SK-N-SH (cell line): ENCODE measurements at regions of chr15 and their contacts with region 1.

Region 1: GRCh38 chr15:74995241-74995778 is at the start of gene SCAMP5:
- DNase-seq: peak; percentile 97
- H3K4me3 ChIP-seq: peak within 1 kb of the TSS; percentile 67 to 84
- H3K27ac ChIP-seq: peak within 1 kb of the TSS in 1 of 2 experiments; percentile 90; a peak in 2 of 4 replicates
- H3K4me1 ChIP-seq: peaks cover 0 to 17% of the 10 kb centered on the region in 2 experiments; a peak in 1 of 4 replicates
- H3K27me3 ChIP-seq: no peaks in the 10 kb centered on the region
- CTCF ChIP-seq: no peak
- EP300 ChIP-seq: 0 out of 4 replicates have a peak, but pooled peaks of 1 of the 2 experiments have one; percentile 2
- RAD21 ChIP-seq: no peak
- polyA plus RNA-seq, gene SCAMP5: 27.9 and 32.7 TPM in 2 replicates

Region 2: DNA sequence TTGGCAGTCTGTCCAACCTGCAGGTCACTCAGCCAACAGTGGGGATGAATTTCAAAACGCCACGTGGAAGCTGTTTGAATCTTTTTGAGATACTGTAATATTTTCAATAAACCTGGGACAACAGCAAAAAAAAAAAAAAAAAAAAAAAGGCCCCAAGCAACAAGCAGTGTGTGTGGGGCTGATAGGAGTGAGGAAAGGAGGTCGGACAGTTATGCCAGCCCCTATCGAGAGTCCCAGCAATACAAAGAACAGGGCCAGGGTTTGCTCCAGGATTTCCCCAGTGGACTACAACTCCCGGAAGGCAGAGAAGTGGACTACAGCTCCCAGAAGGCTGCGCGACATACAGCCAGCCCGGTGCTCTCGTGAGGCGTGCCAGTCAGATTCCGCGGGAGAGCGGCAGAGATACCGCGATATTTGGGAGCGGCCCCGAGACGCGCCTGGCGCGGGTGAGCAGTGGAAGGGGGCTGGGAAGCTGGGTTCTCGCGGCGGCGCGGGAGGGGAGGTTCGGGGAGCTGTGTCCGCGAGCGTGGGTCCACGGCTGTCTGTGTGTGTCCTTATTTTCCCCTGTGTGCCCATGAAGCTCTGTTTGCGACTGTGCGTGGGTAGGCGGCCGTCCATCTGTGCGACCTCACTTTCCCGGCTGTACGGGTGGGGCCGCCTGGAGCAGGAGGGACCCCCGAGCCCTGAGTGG is 28.0 kb after region 1 on chr15 and contains the start of gene PPCDC:
- CTCF ChIA-PET with region 1: interaction called, 5 read pairs
- POLR2A ChIA-PET with region 1: interaction called, 15 read pairs
- DNase-seq: peak; percentile 97
- H3K4me3 ChIP-seq: peak within 1 kb of the TSS; percentile 94 to 97
- H3K27ac ChIP-seq: peak within 1 kb of the TSS; percentile 63 to 89
- H3K4me1 ChIP-seq: peaks cover 0 to 6% of the 10 kb centered on the region in 2 experiments; a peak in 1 of 4 replicates
- H3K27me3 ChIP-seq: no peaks in the 10 kb centered on the region
- CTCF ChIP-seq: no peak
- EP300 ChIP-seq: no peak
- RAD21 ChIP-seq: no peak
- polyA plus RNA-seq, gene PPCDC: 19.8 and 20.7 TPM in 2 replicates